ENCODE measurements at regions of chr2 and their contacts with region 1.

Region 1: GRCh38 chr2:106734165-106734564 is 151.8 kb downstream of the ST6GAL2 start:
- DNase-seq: no peak
- H3K4me3 ChIP-seq: no peak overlapping the region
- H3K27ac ChIP-seq: no peak overlapping the region
- H3K27me3 ChIP-seq: no peaks in the 10 kb centered on the region
- CTCF ChIP-seq: no peak

Region 2: DNA sequence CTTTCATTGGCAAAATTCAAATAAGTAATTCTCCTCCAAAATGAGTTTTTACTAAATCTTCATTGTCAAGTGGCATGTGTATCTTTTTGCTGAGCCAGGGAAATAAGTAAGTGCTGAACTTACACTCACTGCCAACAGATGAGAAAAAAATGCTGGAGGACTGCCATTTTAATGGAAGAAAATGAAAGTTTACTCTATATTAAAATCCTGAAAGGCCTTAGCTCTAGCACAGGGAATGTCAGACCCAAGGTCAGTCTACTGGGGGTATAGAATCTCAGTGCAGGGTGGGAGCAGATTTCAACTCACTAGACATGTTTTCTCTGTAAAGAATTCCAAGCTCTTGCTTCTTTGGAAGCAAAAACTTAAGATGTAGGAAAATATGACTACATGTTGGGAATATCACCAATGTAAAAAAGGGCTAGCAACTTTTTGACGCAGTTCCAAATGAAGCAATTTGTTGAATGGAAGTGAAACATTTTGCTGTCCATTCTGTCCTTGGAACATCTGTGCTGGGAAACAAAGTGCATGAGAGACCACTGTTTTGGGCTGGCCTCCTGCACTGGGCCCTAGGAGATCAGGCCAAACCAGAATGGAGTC is 24.8 kb after region 1 on chr2:
- intact Hi-C with region 1: loop called in 1 of 2 experiments (anchors 2 kb)
- DNase-seq: no peak
- H3K4me3 ChIP-seq: no peak overlapping the region
- H3K27ac ChIP-seq: no peak overlapping the region
- H3K27me3 ChIP-seq: no peaks in the 10 kb centered on the region
- CTCF ChIP-seq: no peak

Region 3: GRCh38 chr2:107325981-107326786 is 592.0 kb after region 1 on chr2:
- intact Hi-C with region 1: no loop called
- DNase-seq: no peak
- H3K4me3 ChIP-seq: no peak overlapping the region
- H3K27ac ChIP-seq: peak overlapping the region in 49 of 59 donors; percentile 2 to 87 (median 59)
- H3K27me3 ChIP-seq: no peaks in the 10 kb centered on the region
- CTCF ChIP-seq: no peak

Measured in dorsolateral prefrontal cortex (tissue), 120 donors.